ENCODE measurements at regions of chr14 and their contacts with region 1.

Region 1: GRCh38 chr14:93132470-93133065 is 16.8 kb upstream of the ITPK1 start:
- DNase-seq: peak; percentile 32
- H3K4me3 Mint-ChIP-seq: no peak overlapping the region
- H3K27ac Mint-ChIP-seq: no peak overlapping the region
- H3K4me1 Mint-ChIP-seq: no peaks in the 10 kb centered on the region
- H3K27me3 Mint-ChIP-seq: peaks cover 7% of the 10 kb centered on the region

Region 2: GRCh38 chr14:92951912-92952471 is 180.6 kb before region 1 on chr14:
- CTCF ChIA-PET with region 1: interaction called, 14 read pairs
- POLR2A ChIA-PET with region 1: no interaction called
- DNase-seq: peak; percentile 84
- H3K4me3 Mint-ChIP-seq: no peak overlapping the region
- H3K27ac Mint-ChIP-seq: no peak overlapping the region
- H3K4me1 Mint-ChIP-seq: no peaks in the 10 kb centered on the region
- H3K27me3 Mint-ChIP-seq: no peaks in the 10 kb centered on the region

Region 3: GRCh38 chr14:92997343-92998061 is 135.1 kb before region 1 on chr14:
- CTCF ChIA-PET with region 1: no interaction called
- POLR2A ChIA-PET with region 1: no interaction called
- DNase-seq: no peak
- H3K4me3 Mint-ChIP-seq: no peak overlapping the region
- H3K27ac Mint-ChIP-seq: no peak overlapping the region
- H3K4me1 Mint-ChIP-seq: no peaks in the 10 kb centered on the region
- H3K27me3 Mint-ChIP-seq: no peaks in the 10 kb centered on the region

Region 4: DNA sequence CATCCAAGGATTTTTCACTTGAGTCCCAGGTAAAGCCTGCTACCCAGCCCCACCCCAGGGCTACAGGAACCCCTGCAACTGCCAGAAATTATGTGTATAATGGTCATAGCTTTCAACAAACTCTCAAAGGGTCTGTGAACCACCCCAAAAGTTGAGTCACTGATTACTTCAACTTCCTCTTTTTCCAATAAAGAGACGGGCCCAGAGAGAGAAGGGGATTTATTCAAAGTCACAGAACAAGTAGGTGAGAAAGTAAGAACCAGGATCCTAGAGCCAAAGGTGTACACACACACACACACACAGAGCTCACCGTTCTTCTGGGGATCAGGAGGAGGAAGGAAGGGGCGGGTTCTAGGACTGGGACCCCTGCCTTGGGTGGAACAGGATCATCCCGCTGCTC is 12.1 kb before region 1 on chr14:
- CTCF ChIA-PET with region 1: interaction called, 53 read pairs
- POLR2A ChIA-PET with region 1: interaction called, 11 read pairs
- DNase-seq: no peak
- H3K4me3 Mint-ChIP-seq: no peak overlapping the region
- H3K27ac Mint-ChIP-seq: no peak overlapping the region
- H3K4me1 Mint-ChIP-seq: peaks cover 9% of the 10 kb centered on the region
- H3K27me3 Mint-ChIP-seq: no peaks in the 10 kb centered on the region

Region 5: DNA sequence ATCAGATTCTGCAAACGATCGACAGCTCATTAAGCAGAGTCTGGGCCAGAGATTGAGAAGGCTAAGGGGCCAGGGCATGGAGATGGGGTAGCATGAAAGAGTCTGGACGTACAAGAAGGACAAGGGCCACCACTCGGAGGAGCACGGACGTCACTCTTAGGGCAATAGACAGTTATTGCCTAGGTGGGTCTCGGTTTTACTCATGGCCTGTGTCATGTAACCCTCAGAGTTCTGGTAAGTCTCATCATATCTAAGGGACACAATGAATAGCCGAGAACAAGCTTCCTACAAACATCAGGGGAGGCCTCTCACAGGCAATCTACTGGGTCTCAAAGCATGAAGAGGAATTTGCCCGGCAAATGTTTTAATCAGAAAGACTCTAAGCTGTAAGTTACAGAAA is 13.6 kb after region 1 on chr14:
- CTCF ChIA-PET with region 1: interaction called, 10 read pairs
- POLR2A ChIA-PET with region 1: interaction called, 5 read pairs
- DNase-seq: no peak
- H3K4me3 Mint-ChIP-seq: no peak overlapping the region
- H3K27ac Mint-ChIP-seq: peak overlapping the region; percentile 55
- H3K4me1 Mint-ChIP-seq: peaks cover 19% of the 10 kb centered on the region
- H3K27me3 Mint-ChIP-seq: no peaks in the 10 kb centered on the region

Region 6: GRCh38 chr14:93332853-93333630 is 200.5 kb after region 1 on chr14 and contains the start of gene BTBD7:
- CTCF ChIA-PET with region 1: no interaction called
- POLR2A ChIA-PET with region 1: no interaction called
- DNase-seq: peak; percentile 96
- H3K4me3 Mint-ChIP-seq: peak within 1 kb of the TSS; percentile 85
- H3K27ac Mint-ChIP-seq: peak within 1 kb of the TSS; percentile 88
- H3K4me1 Mint-ChIP-seq: peaks cover 45% of the 10 kb centered on the region
- H3K27me3 Mint-ChIP-seq: no peaks in the 10 kb centered on the region
- total RNA-seq, gene BTBD7: 13.4 to 16.8 TPM